Activated CD8-positive, alpha-beta T cell treated with anti-CD3 and anti-CD28 coated beads, Interleukin-2, amount 10 ng/mL, durations not matched to agents 7 days and 5 days (primary cell): ENCODE measurements at regions of chr12 and their contacts with region 1.

Region 1: GRCh38 chr12:53746592-53747092 is 5.1 kb downstream of the CISTR start:
- DNase-seq: peak; percentile 92
- ATAC-seq: peak; percentile 78
- H3K4me3 Mint-ChIP-seq: no peak overlapping the region
- H3K27ac Mint-ChIP-seq: no peak overlapping the region
- H3K4me1 Mint-ChIP-seq: peaks cover 3% of the 10 kb centered on the region
- H3K27me3 Mint-ChIP-seq: peaks cover 30% of the 10 kb centered on the region

Region 2: DNA sequence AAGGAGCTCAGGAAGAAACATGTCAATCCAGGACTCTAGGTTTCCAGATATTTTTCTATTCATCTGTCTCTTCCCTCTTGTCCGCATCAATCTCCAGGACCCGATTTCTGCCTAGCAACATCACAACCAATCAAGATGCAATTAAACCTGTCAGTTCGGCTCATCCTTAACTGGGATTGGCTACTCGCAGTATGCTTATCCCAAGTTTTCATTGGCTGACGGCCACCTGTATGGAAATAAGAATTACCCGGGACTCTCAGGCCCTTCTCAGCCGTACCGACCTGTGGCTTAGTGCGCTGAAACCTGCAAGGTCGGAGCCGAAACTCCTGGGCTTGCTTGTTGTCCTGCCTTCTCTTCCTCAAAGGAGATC is 50.4 kb before region 1 on chr12:
- CTCF ChIA-PET with region 1: interaction called, 160 read pairs
- POLR2A ChIA-PET with region 1: no interaction called
- DNase-seq: no peak
- ATAC-seq: no peak
- H3K4me3 Mint-ChIP-seq: no peak overlapping the region
- H3K27ac Mint-ChIP-seq: no peak overlapping the region
- H3K4me1 Mint-ChIP-seq: peaks cover 24% of the 10 kb centered on the region
- H3K27me3 Mint-ChIP-seq: peaks cover 77% of the 10 kb centered on the region

Region 3: DNA sequence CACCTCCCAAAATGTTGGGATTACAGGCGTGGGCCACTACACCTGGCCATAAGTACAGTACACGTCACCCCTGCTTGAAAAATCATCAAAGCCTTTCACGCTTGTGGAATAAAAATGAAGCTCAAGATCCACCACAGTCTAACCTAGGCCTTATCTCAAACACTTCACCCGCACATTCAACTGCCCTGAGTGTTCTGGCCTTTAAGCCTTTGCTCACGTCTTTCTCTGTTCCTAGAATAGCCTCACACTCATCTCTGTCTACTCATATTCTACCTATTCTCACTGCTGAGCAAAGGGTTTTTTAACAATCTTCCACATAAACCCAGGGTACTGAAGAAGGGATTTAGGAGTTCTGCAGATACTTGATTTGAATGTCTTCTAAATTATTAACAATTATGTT is 29.3 kb before region 1 on chr12:
- CTCF ChIA-PET with region 1: interaction called, 15 read pairs
- POLR2A ChIA-PET with region 1: no interaction called
- DNase-seq: no peak
- ATAC-seq: no peak
- H3K4me3 Mint-ChIP-seq: no peak overlapping the region
- H3K27ac Mint-ChIP-seq: no peak overlapping the region
- H3K4me1 Mint-ChIP-seq: no peaks in the 10 kb centered on the region
- H3K27me3 Mint-ChIP-seq: no peaks in the 10 kb centered on the region

Region 4: DNA sequence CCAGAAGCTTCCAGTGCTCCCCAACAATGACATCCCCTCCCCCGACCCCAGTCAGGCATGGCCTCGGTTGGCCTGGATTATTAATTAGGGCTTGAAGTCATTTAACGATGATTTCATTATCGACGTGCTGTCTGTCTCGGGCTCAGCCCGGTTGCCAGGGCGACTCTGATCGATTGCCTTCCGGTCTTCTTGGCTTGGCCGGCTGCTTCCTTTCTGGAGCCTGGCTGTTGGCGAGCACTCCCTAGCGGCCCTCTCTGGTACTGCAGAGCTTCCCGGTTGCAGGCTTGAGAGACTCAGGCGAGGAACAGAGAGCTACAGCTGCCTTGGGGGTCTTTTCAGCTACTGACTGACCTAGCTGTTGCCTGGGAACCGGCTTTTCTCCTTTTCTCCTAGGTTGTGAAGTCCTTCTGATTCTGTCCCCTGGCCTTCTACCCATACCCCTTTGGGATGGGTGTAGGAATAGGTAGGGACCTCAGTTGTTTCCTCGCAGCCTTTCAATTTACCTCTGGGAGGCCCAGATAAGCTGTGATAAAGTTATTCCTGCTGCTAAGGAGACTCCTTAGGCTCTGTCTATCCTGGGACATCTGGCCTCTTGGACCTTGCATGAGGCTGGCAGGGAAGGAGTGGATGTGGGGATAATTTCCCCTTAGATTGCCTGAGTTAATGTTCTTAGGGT is 10.6 kb after region 1 on chr12:
- CTCF ChIA-PET with region 1: interaction called, 187 read pairs
- POLR2A ChIA-PET with region 1: interaction called, 3 read pairs
- DNase-seq: peak; percentile 91
- ATAC-seq: peak; percentile 83
- H3K4me3 Mint-ChIP-seq: peak overlapping the region; percentile 42
- H3K27ac Mint-ChIP-seq: peak overlapping the region; percentile 51
- H3K4me1 Mint-ChIP-seq: peaks cover 5% of the 10 kb centered on the region
- H3K27me3 Mint-ChIP-seq: peaks cover 36% of the 10 kb centered on the region

Region 5: DNA sequence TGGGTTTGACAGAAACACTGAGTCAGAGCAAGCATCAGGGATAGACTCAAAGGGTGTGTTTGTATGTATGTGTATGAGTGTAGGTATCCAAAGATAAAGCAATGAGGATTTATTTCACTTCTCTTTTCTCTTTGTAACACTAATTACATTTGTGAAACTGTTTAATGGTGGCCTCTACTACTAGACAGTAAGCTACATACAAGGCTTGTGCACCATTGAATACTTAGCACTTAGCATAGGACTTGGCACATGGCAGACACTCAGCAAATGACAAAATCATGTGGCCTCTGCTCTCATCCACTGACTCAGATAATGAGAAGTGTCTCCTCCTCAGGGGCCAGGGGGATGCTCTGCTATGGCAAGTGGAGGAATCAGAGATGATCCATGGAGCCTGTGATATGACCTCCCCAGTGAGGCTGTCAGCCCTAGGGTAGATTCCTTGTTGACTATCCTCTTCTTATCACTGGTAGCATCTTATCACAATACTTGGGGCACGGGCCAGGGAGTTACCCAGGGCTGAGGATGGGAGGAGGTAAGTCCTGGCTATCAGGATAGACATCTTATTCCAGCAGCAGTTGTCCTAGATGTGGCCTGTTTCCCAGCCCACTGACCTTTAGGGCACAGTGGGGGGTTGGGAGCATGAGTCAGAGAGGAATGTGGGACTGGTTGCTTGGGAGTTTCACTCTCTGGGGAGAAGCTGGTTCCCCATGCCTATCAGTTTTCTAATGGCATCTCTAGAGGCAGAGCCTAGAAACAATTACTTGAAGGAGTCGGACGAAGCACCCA is 120.8 kb after region 1 on chr12:
- CTCF ChIA-PET with region 1: no interaction called
- POLR2A ChIA-PET with region 1: no interaction called
- DNase-seq: no peak
- ATAC-seq: no peak
- H3K4me3 Mint-ChIP-seq: no peak overlapping the region
- H3K27ac Mint-ChIP-seq: no peak overlapping the region
- H3K4me1 Mint-ChIP-seq: no peaks in the 10 kb centered on the region
- H3K27me3 Mint-ChIP-seq: peaks cover 19% of the 10 kb centered on the region